CD8-positive, alpha-beta T cell (primary cell): ENCODE measurements at regions of chr3 and their contacts with region 1.

Region 1: DNA sequence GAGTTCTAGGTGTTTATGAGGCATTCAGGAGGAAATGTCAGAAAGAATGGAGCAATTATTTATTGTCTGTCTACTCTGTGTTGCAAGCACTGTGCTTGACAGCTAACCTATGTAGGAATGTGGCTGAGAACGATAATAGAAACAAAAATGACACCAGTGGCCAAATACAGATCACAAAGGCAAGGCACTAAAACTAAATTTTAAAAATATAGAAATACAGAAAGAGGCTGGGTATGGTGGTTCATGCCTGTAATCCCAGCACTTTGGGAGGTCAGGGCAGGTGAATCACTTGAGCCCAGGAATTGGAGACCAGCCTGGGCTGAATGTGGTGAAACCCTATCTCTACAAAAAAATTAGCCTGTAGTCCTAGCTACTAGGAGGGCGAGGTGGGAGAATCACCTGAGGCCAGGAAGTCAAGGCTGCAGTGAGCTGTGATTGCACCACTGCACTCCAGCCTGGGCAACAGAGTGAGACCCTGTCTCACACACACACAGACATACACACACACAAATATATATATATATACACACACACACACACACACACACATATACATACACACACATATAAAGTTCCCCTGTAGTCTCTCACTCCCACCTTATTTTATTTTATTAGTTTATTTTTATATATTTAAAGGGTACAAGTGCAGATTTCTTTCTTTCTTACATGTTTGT is 6.0 kb downstream of the PRKCI start:
- DNase-seq: no peak
- ATAC-seq: no peak
- H3K4me3 ChIP-seq: no peak overlapping the region
- H3K4me3 Mint-ChIP-seq: no peak overlapping the region
- H3K27ac ChIP-seq: no peak overlapping the region
- H3K27ac Mint-ChIP-seq: no peak overlapping the region
- H3K4me1 ChIP-seq: peaks cover 3% of the 10 kb centered on the region
- H3K4me1 Mint-ChIP-seq: peaks cover 38% of the 10 kb centered on the region
- H3K27me3 ChIP-seq: no peaks in the 10 kb centered on the region
- H3K27me3 Mint-ChIP-seq: no peaks in the 10 kb centered on the region
- CTCF ChIP-seq: no peak

Region 2: DNA sequence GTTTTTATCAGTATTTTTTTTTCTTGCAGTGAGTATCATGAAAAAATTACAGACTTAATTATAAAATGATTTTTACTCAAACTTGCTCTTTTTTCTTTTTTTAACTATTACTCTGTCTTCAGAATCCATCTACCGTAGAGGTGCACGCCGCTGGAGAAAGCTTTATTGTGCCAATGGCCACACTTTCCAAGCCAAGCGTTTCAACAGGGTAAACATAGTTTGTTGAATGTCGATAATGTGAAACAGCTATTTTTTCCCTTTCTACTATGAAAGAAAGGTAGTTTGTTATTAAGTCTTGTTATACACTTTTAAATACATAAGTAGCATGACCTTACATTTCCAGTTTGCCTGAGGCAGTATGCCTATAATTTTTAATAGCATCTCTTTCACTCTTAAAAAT is 39.6 kb after region 1 on chr3:
- CTCF ChIA-PET with region 1: no interaction called
- POLR2A ChIA-PET with region 1: no interaction called
- intact Hi-C with region 1: loop called in 1 of 2 experiments (anchors 5 kb)
- DNase-seq: no peak
- ATAC-seq: no peak
- H3K4me3 ChIP-seq: no peak overlapping the region
- H3K4me3 Mint-ChIP-seq: no peak overlapping the region
- H3K27ac ChIP-seq: no peak overlapping the region
- H3K27ac Mint-ChIP-seq: no peak overlapping the region
- H3K4me1 ChIP-seq: no peaks in the 10 kb centered on the region
- H3K4me1 Mint-ChIP-seq: no peaks in the 10 kb centered on the region
- H3K27me3 ChIP-seq: no peaks in the 10 kb centered on the region
- H3K27me3 Mint-ChIP-seq: no peaks in the 10 kb centered on the region
- CTCF ChIP-seq: no peak

Region 3: DNA sequence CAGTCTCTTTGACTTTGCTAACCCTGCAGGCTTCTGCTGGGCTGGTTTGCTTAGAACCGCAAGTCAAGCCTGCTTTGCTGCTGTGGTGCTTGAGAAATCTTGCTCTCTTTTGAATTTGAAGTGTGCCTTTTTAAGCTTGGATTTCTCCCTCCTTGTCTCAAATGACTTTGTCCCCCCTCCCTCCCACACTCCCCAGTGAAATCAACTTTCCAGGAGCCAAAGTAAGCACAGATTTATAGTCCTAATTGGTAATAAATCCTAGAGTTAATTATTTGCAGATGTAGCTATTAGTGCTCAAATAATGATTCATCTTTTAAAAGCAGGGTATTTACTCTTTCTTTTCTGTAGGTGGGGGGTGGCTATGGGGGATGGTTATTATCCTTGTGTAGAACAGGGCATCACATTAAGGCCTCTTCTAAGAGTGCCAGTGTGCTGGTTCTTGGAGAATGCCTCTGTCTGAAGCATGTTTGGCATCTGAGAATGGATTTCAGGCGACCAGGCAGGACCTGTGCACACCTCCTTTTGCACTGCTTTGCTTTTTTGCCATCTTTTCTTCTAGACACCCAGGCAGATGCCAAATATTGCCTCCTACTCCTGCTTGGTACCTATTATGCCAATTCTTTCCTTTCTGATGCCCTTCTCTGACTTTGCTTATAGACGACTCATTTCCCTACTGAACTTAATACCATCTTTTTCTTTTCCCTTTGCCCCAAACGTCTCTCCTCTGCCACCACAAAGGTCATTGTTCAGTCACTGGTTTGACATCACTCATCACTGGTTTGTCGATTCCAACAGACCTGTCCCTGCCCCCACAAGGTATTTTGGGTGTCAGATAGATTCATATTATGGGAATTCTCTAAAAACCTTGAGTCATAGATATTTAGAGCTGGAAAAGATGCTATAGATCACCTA is 241.2 kb after region 1 on chr3:
- CTCF ChIA-PET with region 1: no interaction called
- POLR2A ChIA-PET with region 1: no interaction called
- intact Hi-C with region 1: no loop called
- DNase-seq: no peak
- ATAC-seq: no peak
- H3K4me3 ChIP-seq: no peak overlapping the region
- H3K4me3 Mint-ChIP-seq: no peak overlapping the region
- H3K27ac ChIP-seq: no peak overlapping the region
- H3K27ac Mint-ChIP-seq: no peak overlapping the region
- H3K4me1 ChIP-seq: no peaks in the 10 kb centered on the region
- H3K4me1 Mint-ChIP-seq: no peaks in the 10 kb centered on the region
- H3K27me3 ChIP-seq: no peaks in the 10 kb centered on the region
- H3K27me3 Mint-ChIP-seq: peaks cover 25% of the 10 kb centered on the region
- CTCF ChIP-seq: no peak